ENCODE measurements at regions of chr3 and their contacts with region 1.

Region 1: GRCh38 chr3:169149349-169149890 is 514.1 kb downstream of the MECOM start:
- DNase-seq: peak; percentile 31 to 52
- ATAC-seq: peak; percentile 76 to 87
- H3K4me3 ChIP-seq: peak overlapping the region in 3 of 4 donors; percentile 29 to 59 (median 54)
- H3K27ac ChIP-seq: peak overlapping the region in 3 of 4 donors; percentile 66 to 79 (median 73)
- H3K4me1 ChIP-seq: peaks cover 8 to 19% of the 10 kb centered on the region in 2 donors
- H3K27me3 ChIP-seq: peaks cover 44 to 63% (median 54%) of the 10 kb centered on the region in 3 donors
- CTCF ChIP-seq: peak; percentile 67 to 89 (median 74)
- POLR2A ChIP-seq: no peak

Region 2: GRCh38 chr3:169662132-169662842 is 512.9 kb after region 1 on chr3:
- in situ Hi-C with region 1: loop called (anchors 5 to 25 kb)
- intact Hi-C with region 1: loop called (anchors 1 kb)
- DNase-seq: peak in 1 of 2 donors; percentile 17
- ATAC-seq: peak; percentile 67 to 73
- H3K4me3 ChIP-seq: peak overlapping the region; percentile 65 to 75 (median 66)
- H3K27ac ChIP-seq: peak overlapping the region; percentile 65 to 74 (median 70)
- H3K4me1 ChIP-seq: peaks cover 8 to 34% of the 10 kb centered on the region in 2 donors
- H3K27me3 ChIP-seq: peaks cover 89 to 98% (median 97%) of the 10 kb centered on the region in 3 donors
- CTCF ChIP-seq: peak in 3 of 5 experiments; percentile 43 to 57 (median 54)
- POLR2A ChIP-seq: no peak

Region 3: GRCh38 chr3:169668957-169669681 is 519.7 kb after region 1 on chr3:
- in situ Hi-C with region 1: loop called (anchors 5 to 25 kb)
- intact Hi-C with region 1: no loop called
- DNase-seq: peak; percentile 23 to 32
- ATAC-seq: peak; percentile 69 to 85
- H3K4me3 ChIP-seq: peak overlapping the region; percentile 41 to 57 (median 49)
- H3K27ac ChIP-seq: peak overlapping the region in 3 of 4 donors; percentile 67 to 71 (median 67)
- H3K4me1 ChIP-seq: peaks cover 11 to 18% of the 10 kb centered on the region in 2 donors
- H3K27me3 ChIP-seq: peaks cover 79 to 85% (median 85%) of the 10 kb centered on the region in 3 donors
- CTCF ChIP-seq: peak; percentile 28 to 77 (median 63)
- POLR2A ChIP-seq: no peak

Region 4: GRCh38 chr3:169744366-169745054 is 595.1 kb after region 1 on chr3:
- in situ Hi-C with region 1: loop called in 1 of 4 experiments (anchors 10 kb)
- intact Hi-C with region 1: loop called (anchors 10 kb)
- DNase-seq: no peak
- ATAC-seq: peak in 1 of 2 donors; percentile 56
- H3K4me3 ChIP-seq: no peak overlapping the region
- H3K27ac ChIP-seq: no peak overlapping the region
- H3K4me1 ChIP-seq: no peaks in the 10 kb centered on the region
- H3K27me3 ChIP-seq: peaks cover 0 to 6% (median 0%) of the 10 kb centered on the region in 3 donors
- CTCF ChIP-seq: peak in 3 of 5 experiments; percentile 26 to 64 (median 50)
- POLR2A ChIP-seq: no peak

Region 5: GRCh38 chr3:169764452-169765274 is 615.2 kb after region 1 on chr3 and contains the start of gene TERC:
- in situ Hi-C with region 1: no loop called
- intact Hi-C with region 1: loop called (anchors 10 kb)
- DNase-seq: peak; percentile 88 to 93
- ATAC-seq: peak; percentile 94
- H3K4me3 ChIP-seq: peak within 1 kb of the TSS; percentile 63 to 96 (median 93)
- H3K27ac ChIP-seq: peak within 1 kb of the TSS; percentile 85 to 96 (median 96)
- H3K4me1 ChIP-seq: peaks cover 0 to 13% of the 10 kb centered on the region in 2 donors
- H3K27me3 ChIP-seq: no peaks in the 10 kb centered on the region
- CTCF ChIP-seq: no peak
- POLR2A ChIP-seq: peak; percentile 97 to 99
- total RNA-seq, gene TERC: 12.0 to 143 (median 24.0) TPM